Activated T-helper 2 cell treated with anti-CD3 and anti-CD28 coated beads, Interferon-gamma antibody, Interleukin-2, Interleukin-4, amounts not matched to agents 10 μg/mL and 5 μg/mL and 100 μg/mL, durations not matched to agents 14 hours and 24 hours and 36 hours (primary cell): ENCODE measurements at regions of chr1 and their contacts with region 1.

Region 1: DNA sequence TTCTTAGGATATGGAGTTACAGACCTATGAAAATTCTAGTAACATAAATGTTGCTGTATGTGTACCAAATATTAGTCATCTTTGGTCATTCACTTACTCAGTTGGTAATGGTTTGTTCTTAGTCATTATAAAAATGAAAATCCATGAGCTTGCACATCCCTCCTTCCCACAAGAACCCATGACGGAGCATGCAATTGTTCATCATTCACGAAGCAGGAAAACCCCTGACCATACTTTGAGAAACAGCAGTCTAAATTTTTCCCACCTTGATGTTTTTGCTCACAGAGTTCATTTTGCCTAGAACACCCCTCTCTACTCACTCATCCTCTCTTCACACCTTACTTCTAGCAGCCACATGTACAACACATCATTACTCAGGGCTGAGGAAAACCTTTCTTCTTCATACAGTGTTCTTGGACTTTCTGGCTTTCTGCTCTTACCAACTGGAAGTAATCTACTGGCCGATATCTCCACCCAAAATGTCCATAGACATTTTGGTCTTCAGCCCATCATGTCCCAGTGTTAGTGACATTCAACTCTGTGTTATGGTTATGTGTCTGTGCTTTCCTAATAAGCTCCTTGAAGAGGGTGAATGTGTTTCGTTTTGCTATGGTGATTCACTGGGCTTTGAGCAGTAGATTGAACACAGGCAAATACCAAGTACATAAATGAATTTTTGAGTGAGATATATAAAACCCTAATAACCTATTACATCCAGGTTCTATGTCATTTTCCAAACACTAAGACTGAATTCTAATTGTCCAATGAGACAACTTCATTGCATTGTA is 189.9 kb downstream of the ZC3H11B start:
- DNase-seq: no peak
- H3K4me3 Mint-ChIP-seq: no peak overlapping the region
- H3K27ac Mint-ChIP-seq: peak overlapping the region; percentile 77
- H3K4me1 Mint-ChIP-seq: peaks cover 18% of the 10 kb centered on the region
- H3K27me3 Mint-ChIP-seq: no peaks in the 10 kb centered on the region

Region 2: DNA sequence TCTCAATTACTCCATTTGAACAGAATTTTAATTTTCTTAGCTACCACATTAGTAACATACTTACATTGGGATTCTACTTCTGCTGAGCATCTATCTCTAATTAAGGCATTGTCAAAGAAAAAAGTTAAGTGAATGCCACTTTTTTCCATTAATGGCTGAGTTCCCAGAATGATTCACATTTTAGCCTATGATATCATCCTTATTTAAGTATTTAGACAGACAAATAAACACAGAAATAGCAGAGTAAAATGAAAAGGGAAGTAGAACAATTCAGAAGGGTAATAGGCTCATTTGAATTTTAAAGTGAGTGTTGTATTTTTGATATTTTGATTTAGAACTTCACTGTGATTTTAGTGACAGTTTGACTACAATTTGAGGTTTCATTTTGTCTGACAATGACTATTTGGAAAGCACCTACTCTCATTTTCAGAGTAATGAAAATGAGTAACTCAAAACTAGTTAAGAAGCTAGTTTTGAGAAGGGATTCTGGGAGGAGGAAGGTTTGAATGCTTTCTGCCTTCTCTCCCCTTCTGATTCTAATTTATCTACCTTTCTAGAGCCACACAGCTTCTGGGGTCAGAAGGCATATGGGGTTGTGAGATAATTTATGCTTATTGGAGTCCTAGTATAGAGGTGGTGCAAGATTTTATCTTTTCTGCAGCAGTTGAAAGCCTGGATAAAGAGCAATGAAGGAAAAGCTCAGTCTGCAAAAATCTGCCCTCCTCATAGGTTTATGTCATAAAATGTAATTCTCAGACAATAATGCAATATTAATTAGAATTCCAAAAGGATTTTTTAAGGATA is 233.8 kb before region 1 on chr1:
- intact Hi-C with region 1: loop called (anchors 10 kb)
- DNase-seq: no peak
- H3K4me3 Mint-ChIP-seq: no peak overlapping the region
- H3K27ac Mint-ChIP-seq: no peak overlapping the region
- H3K4me1 Mint-ChIP-seq: peaks cover 21% of the 10 kb centered on the region
- H3K27me3 Mint-ChIP-seq: no peaks in the 10 kb centered on the region

Region 3: GRCh38 chr1:219518168-219518907 is 95.3 kb after region 1 on chr1:
- intact Hi-C with region 1: loop called (anchors 5 kb)
- DNase-seq: peak; percentile 9
- H3K4me3 Mint-ChIP-seq: no peak overlapping the region
- H3K27ac Mint-ChIP-seq: no peak overlapping the region
- H3K4me1 Mint-ChIP-seq: peaks cover 9% of the 10 kb centered on the region
- H3K27me3 Mint-ChIP-seq: no peaks in the 10 kb centered on the region

Region 4: DNA sequence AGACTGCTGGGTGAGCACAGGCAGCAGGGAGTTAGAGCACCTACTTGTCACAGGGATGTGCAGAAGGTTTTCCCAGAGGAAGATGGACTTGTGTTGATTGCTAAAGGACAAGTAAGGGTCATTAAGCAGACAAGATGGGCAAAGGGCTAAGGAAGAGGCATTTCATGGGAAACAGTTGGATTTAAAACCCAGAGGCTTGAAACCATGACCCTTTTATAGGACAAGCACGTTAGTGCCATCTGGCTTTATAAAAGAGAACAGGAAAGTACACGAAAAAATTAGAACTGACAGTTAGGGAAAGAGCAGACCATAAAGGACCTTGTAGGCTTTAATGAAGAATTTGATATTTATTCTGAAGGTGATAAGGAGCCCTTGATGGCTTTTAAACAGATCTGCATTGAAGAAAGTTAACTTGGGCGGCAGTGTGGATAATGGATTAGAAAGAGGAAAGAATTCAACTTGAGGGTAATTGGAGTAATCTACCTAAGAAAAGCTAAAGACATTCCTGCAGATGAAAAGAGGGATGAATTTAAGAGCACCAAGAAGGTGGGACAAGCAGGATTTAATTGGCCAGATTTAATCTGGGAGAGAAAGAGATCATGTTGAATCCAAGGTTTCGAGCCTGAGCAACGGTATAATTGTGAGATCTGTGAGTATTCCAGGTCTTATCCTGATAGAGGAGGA is 121.3 kb after region 1 on chr1:
- intact Hi-C with region 1: loop called (anchors 5 kb)
- DNase-seq: no peak
- H3K4me3 Mint-ChIP-seq: no peak overlapping the region
- H3K27ac Mint-ChIP-seq: no peak overlapping the region
- H3K4me1 Mint-ChIP-seq: peaks cover 4% of the 10 kb centered on the region
- H3K27me3 Mint-ChIP-seq: no peaks in the 10 kb centered on the region